AG04450 (cell line): ENCODE measurements at regions of chr3 and their contacts with region 1.

Region 1: GRCh38 chr3:134212906-134213665 is 37.6 kb downstream of the RYK start:
- DNase-seq: no peak
- H3K4me3 ChIP-seq: no peak overlapping the region
- H3K27ac ChIP-seq: no peak overlapping the region
- H3K27me3 ChIP-seq: no peaks in the 10 kb centered on the region
- CTCF ChIP-seq: peak; percentile 99

Region 2: DNA sequence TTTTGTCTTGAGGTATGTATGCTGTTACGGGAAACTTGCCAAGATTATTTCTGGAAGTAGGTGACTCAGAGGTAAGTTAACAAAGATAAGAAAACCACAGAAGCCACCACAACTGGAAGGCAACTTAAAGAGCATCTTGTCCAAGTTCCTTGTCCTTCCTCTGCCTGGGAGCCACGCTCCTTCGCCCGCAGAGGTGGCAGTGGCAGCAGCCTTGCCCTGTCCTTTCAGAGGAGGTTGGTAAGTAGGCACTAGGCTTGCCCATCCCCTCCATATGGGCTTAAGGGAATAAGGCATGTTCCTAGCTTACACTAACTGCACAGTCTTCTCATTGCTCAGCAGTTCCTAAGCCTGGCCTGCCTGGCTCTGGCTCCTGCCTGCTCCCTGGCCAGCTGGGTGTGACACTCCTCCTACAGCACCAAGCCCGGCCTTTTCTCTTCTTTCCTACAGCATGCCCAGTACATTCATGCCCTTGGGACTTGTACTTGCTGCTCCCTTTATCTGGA is 269.4 kb before region 1 on chr3:
- CTCF ChIA-PET with region 1: interaction called, 21 read pairs
- POLR2A ChIA-PET with region 1: no interaction called
- DNase-seq: peak; percentile 87
- H3K4me3 ChIP-seq: no peak overlapping the region
- H3K27ac ChIP-seq: peak overlapping the region; percentile 77
- H3K27me3 ChIP-seq: peaks cover 3% of the 10 kb centered on the region
- CTCF ChIP-seq: no peak

Region 3: DNA sequence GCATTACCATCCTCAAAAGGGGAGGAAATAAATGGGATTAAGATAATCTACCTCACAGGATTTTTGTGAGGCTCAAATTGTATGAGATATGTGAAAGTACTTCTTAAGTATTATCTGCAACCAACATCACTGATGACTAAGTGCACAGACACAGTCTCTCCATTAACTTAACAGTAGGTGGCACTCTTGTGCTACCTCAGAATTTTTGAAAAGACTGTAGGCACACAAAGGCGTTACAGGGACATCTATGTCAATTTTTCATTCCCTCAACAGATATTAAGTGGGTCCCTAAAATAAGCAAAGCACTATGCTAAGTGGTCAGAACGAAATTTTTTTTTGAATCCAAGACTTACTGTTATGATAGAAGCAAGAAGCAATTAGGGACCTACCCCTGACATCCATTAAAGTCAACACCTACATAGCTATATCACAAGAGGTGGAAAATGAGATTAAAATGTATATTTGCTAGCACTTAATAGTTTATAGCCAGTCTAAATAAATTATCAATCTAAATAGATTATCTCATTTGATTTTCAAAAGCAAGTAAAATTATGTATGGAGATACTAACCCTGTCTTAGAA is 15.3 kb before region 1 on chr3:
- CTCF ChIA-PET with region 1: interaction called, 188 read pairs
- POLR2A ChIA-PET with region 1: no interaction called
- DNase-seq: peak; percentile 44
- H3K4me3 ChIP-seq: no peak overlapping the region
- H3K27ac ChIP-seq: no peak overlapping the region
- H3K27me3 ChIP-seq: no peaks in the 10 kb centered on the region
- CTCF ChIP-seq: peak; percentile 77

Region 4: DNA sequence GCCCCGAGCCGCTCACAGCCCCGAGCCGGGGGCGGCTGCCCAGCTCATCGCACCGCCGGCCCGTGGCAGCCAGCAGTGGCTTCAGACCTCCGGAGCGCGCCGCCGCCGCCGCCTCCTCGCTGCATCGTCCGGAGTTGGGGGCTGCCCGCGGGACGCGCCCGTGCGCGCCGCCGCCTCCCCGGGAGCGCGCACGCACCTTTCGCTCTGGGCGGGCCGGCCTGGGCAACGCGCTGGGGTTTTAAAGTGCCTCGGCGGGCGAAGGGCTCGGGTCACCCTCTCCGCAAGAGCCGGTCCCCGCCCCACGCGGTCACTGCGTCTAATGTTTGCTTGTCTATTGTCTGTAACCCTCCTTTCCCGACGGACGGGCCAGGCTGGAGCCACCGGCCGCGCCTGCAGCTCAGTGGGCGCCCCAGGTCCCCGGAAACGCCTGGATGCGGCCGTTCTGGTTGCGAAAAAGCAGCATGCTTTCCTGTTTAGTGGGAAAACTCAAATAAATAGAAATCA is 37.7 kb after region 1 on chr3 and contains the start of gene RYK:
- CTCF ChIA-PET with region 1: interaction called, 13 read pairs
- POLR2A ChIA-PET with region 1: no interaction called
- DNase-seq: peak; percentile 10
- H3K4me3 ChIP-seq: peak within 1 kb of the TSS; percentile 80
- H3K27ac ChIP-seq: peak within 1 kb of the TSS; percentile 79
- H3K27me3 ChIP-seq: no peaks in the 10 kb centered on the region
- CTCF ChIP-seq: no peak
- polyA plus RNA-seq, gene RYK: 67.6 and 74.5 TPM in 2 replicates

Region 5: GRCh38 chr3:134308350-134308891 is 95.3 kb after region 1 on chr3:
- CTCF ChIA-PET with region 1: interaction called, 145 read pairs
- POLR2A ChIA-PET with region 1: interaction called, 4 read pairs
- DNase-seq: peak; percentile 59
- H3K4me3 ChIP-seq: peak overlapping the region; percentile 31; the same call in 1 of the 2 replicates
- H3K27ac ChIP-seq: peak overlapping the region; percentile 52
- H3K27me3 ChIP-seq: no peaks in the 10 kb centered on the region
- CTCF ChIP-seq: peak; percentile 100

Region 6: GRCh38 chr3:134337511-134338195 is 124.6 kb after region 1 on chr3:
- CTCF ChIA-PET with region 1: no interaction called
- POLR2A ChIA-PET with region 1: no interaction called
- DNase-seq: no peak
- H3K4me3 ChIP-seq: no peak overlapping the region
- H3K27ac ChIP-seq: no peak overlapping the region
- H3K27me3 ChIP-seq: no peaks in the 10 kb centered on the region
- CTCF ChIP-seq: no peak